Calu3 (cell line): ENCODE measurements at regions of chr12 and their contacts with region 1.

Region 1: GRCh38 chr12:131454418-131455217 is 256.3 kb upstream of the SFSWAP start:
- DNase-seq: peak; percentile 84
- H3K4me3 Mint-ChIP-seq: no peak overlapping the region
- H3K27ac Mint-ChIP-seq: no peak overlapping the region
- H3K4me1 Mint-ChIP-seq: no peaks in the 10 kb centered on the region
- H3K27me3 Mint-ChIP-seq: peaks cover 81% of the 10 kb centered on the region
- CTCF ChIP-seq: peak; percentile 80

Region 2: DNA sequence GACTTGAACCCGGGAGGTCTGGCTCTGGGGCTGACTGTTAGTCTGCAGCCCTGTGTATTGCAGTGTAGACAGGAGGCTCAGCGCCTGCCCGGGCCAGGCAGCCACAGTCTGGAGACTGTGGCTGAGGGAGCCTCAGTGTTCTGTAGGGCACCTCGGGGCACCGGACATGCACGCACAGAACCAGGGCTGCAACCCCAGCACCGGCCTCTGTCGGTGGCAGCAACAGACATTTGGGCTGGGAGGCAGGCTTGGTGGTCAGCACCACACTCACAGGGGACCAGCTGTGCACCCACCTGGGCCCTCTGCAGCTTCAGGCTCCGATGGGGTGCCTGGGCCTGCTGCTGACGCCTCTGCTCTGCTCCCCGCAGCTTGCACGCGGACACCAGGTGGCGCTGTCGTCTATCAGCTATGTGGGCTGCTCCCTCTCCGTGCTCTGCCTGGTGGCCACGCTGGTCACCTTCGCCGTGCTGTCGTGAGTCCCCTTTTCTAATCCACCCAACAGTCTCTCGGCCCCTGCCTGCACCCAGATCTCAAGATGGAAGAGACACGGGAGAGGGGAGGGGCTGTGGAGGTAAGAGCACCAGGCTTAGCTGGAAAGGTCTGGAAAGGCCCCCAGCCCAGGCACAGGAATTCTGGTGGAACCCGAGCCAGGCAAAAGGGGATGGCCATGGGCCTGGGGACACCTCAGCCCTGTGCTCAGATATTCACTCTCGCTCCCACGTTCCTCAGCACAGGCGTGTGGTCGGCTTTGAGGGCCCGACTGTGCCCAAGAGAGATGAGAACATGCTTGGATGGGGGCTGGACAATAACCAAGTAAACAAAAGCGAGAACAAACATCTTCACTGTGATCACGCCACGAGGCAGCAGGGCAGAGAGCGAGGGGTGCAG is 349.9 kb before region 1 on chr12:
- CTCF ChIA-PET with region 1: interaction called, 30 read pairs
- intact Hi-C with region 1: loop called (anchors 1 kb)
- DNase-seq: peak; percentile 94
- H3K4me3 Mint-ChIP-seq: no peak overlapping the region
- H3K27ac Mint-ChIP-seq: no peak overlapping the region
- H3K4me1 Mint-ChIP-seq: no peaks in the 10 kb centered on the region
- H3K27me3 Mint-ChIP-seq: peaks cover 37% of the 10 kb centered on the region
- CTCF ChIP-seq: peak; percentile 92

Region 3: DNA sequence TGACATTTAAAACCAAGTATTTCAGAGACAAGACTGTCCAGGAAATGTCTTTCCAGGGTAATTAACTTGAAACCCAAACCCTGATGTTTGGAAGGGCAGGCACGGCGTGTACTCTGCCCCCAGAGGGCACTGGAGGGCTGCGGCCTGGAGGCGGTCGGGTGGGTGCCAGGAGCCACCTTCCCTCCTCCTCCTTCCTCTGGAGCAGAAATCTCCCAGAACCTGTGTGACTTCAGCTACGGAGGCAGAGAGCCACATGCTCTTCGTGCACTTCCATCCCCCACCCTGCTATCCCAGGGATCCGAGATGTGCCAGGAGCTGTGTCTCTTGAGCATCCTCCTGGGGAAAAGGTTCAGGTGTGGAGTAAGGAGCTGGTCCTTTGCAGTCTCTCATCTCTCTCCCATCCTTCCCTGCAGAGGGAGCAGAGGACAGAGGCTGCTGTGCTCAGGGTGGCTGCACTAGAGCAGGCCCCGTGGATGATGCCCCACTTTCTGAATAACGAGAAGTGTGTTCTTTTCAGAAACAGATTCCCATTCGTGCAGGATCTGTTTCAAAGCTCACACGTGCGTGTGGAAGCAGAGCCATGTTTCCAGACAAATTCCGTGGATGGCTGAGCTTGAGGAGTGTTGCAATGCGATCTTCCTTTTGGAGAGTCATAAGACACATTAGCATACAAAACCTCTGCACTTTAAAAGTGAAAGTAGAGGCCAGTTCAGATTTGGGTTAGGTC is 338.1 kb before region 1 on chr12:
- CTCF ChIA-PET with region 1: interaction called, 9 read pairs
- intact Hi-C with region 1: loop called (anchors 5 kb)
- DNase-seq: peak; percentile 42
- H3K4me3 Mint-ChIP-seq: no peak overlapping the region
- H3K27ac Mint-ChIP-seq: no peak overlapping the region
- H3K4me1 Mint-ChIP-seq: no peaks in the 10 kb centered on the region
- H3K27me3 Mint-ChIP-seq: peaks cover 87% of the 10 kb centered on the region
- CTCF ChIP-seq: peak; percentile 64

Region 4: DNA sequence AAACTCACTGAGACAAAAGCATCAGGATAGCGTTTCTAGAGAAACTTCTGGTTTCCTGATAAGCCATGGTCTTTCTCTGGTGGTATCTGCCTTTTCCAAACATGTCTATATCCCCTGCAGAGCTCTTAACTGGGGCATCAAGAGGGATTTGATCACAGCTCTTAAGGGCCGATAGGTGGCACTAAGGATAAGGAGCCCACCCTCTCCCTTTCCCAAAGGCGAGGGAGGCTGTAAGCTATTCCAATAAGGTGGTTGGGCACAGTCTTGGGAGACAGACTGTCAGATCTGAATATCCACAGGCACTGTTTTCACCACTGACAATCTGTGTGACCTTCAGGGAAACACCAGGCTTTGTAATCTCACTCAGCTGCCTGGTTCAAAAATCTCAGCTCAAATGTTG is 295.0 kb before region 1 on chr12:
- CTCF ChIA-PET with region 1: interaction called, 15 read pairs
- intact Hi-C with region 1: no loop called
- DNase-seq: no peak
- H3K4me3 Mint-ChIP-seq: no peak overlapping the region
- H3K27ac Mint-ChIP-seq: no peak overlapping the region
- H3K4me1 Mint-ChIP-seq: no peaks in the 10 kb centered on the region
- H3K27me3 Mint-ChIP-seq: peaks cover 83% of the 10 kb centered on the region
- CTCF ChIP-seq: no peak

Region 5: DNA sequence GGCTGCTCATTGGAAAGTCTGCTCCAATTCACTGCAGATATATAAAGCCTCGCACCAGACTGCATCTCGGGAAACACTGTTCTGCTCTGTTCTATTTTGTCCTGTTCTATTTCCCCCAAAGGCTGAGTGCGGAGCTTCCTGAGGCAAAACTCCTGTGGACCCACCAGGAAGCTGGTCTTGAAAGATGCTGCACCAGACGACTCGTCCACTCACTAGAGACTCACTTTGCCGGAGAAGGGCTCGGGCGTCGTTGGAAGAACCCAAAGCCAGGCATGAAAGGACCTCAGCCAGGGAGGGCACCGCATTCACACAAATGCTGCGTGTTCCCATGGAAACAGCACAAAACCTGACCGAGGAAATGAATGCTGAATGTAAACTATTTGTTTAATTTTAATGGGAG is 74.9 kb before region 1 on chr12:
- CTCF ChIA-PET with region 1: no interaction called
- intact Hi-C with region 1: loop called (anchors 5 kb)
- DNase-seq: no peak
- H3K4me3 Mint-ChIP-seq: no peak overlapping the region
- H3K27ac Mint-ChIP-seq: no peak overlapping the region
- H3K4me1 Mint-ChIP-seq: no peaks in the 10 kb centered on the region
- H3K27me3 Mint-ChIP-seq: peaks cover 87% of the 10 kb centered on the region
- CTCF ChIP-seq: no peak